ENCODE measurements at regions of chr3 and their contacts with region 1.

Region 1: DNA sequence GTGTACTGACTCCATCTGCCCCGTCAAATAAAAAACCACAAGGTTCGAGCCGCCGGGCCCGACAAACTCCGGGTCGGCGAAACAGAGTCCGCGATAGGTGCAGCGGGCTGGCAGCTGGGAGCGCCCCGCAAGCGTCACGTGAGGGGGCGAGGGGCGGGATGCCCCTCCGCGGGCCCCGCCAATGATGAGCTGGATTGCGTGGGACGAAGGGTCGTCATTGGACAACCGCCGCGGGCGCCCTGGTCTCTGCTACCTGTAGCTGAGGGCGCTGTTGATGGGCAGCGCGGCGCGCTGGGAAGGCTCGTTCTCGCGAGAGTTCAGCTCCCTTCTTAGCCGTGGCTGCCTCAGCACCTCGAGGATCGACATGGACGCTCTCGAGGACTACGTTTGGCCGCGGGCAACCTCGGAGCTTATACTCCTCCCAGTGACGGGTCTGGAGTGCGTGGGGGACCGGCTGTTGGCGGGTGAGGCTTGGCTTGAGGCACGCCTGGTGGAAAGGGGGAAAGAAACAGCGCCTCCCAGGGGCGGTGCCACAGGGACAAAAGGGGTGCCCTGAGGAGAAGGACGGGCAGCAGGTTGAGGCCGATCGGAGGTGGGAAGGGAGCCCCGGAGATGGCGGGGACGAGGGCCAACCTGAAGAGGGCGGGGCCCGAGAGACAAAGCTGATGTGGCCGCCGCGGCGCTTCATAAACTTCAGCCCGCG is at the start of gene WDR6:
- DNase-seq: peak; percentile 98
- H3K4me3 ChIP-seq: peak within 1 kb of the TSS; percentile 92
- H3K4me3 Mint-ChIP-seq: peak within 1 kb of the TSS; percentile 94
- H3K27ac Mint-ChIP-seq: peak within 1 kb of the TSS; percentile 98
- H3K4me1 ChIP-seq: peaks cover 26% of the 10 kb centered on the region
- H3K4me1 Mint-ChIP-seq: peaks cover 13% of the 10 kb centered on the region
- H3K27me3 ChIP-seq: no peaks in the 10 kb centered on the region
- H3K27me3 Mint-ChIP-seq: no peaks in the 10 kb centered on the region
- CTCF ChIP-seq: peak in 1 of 2 experiments; percentile 8
- total RNA-seq, gene WDR6: 184 and 185 TPM in 2 replicates

Region 2: GRCh38 chr3:48716982-48717746 is 290.1 kb before region 1 on chr3 and contains the start of gene IP6K2:
- CTCF ChIA-PET with region 1: no interaction called
- POLR2A ChIA-PET with region 1: interaction called, 12 read pairs
- intact Hi-C with region 1: no loop called
- DNase-seq: peak; percentile 99
- H3K4me3 ChIP-seq: peak within 1 kb of the TSS; percentile 55
- H3K4me3 Mint-ChIP-seq: peak within 1 kb of the TSS; percentile 66
- H3K27ac Mint-ChIP-seq: peak within 1 kb of the TSS; percentile 88
- H3K4me1 ChIP-seq: peaks cover 41% of the 10 kb centered on the region
- H3K4me1 Mint-ChIP-seq: peaks cover 42% of the 10 kb centered on the region
- H3K27me3 ChIP-seq: no peaks in the 10 kb centered on the region
- H3K27me3 Mint-ChIP-seq: no peaks in the 10 kb centered on the region
- CTCF ChIP-seq: no peak
- total RNA-seq, gene IP6K2: 91.7 and 100 TPM in 2 replicates

Region 3: DNA sequence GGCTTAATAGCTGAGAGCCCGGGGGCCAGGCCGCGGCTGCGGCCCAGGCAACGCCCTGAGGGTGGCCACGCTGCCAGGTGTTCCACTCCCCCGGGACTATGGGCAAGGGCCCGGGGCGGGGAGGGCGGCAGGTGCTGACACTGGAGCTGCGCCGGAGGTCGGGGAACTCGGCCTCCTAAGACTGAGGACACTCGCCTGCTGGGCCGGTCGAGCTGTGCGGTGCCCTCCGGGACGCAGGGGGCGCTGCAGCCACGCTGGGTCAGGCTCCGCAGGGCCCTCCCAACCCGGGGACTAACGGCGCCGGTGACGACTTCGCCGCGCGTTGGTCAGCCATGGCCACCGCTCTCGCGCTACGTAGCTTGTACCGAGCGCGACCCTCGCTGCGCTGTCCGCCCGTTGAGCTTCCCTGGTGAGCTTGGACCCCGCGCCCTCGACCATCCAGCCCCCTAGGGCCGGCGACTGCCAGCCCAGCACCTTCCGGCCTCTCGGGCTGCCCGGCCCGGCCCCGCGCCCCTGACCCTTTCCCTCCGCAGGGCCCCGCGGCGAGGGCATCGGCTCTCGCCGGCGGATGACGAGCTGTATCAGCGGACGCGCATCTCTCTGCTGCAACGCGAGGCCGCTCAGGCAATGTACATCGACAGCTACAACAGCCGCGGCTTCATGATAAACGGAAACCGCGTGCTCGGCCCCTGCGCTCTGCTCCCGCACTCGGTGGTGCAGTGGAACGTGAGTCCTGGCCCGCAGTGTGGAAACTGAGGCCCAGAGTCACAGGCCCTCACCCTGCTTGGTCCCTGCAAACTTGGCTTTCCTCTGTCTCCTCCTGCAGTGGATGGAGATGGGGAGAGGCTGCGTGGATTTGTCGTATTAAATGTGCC is 14.8 kb after region 1 on chr3 and contains the start of gene NDUFAF3:
- CTCF ChIA-PET with region 1: interaction called, 20 read pairs
- POLR2A ChIA-PET with region 1: interaction called, 92 read pairs
- intact Hi-C with region 1: no loop called
- DNase-seq: peak; percentile 95 to 98
- H3K4me3 ChIP-seq: peak within 1 kb of the TSS; percentile 85
- H3K4me3 Mint-ChIP-seq: peak within 1 kb of the TSS; percentile 88
- H3K27ac Mint-ChIP-seq: peak within 1 kb of the TSS; percentile 97
- H3K4me1 ChIP-seq: peaks cover 3% of the 10 kb centered on the region; the same call in 1 of the 2 replicates
- H3K4me1 Mint-ChIP-seq: peaks cover 6% of the 10 kb centered on the region
- H3K27me3 ChIP-seq: no peaks in the 10 kb centered on the region
- H3K27me3 Mint-ChIP-seq: no peaks in the 10 kb centered on the region
- CTCF ChIP-seq: peak; percentile 82 to 92
- total RNA-seq, gene NDUFAF3: 65.9 and 68.7 TPM in 2 replicates

Region 4: DNA sequence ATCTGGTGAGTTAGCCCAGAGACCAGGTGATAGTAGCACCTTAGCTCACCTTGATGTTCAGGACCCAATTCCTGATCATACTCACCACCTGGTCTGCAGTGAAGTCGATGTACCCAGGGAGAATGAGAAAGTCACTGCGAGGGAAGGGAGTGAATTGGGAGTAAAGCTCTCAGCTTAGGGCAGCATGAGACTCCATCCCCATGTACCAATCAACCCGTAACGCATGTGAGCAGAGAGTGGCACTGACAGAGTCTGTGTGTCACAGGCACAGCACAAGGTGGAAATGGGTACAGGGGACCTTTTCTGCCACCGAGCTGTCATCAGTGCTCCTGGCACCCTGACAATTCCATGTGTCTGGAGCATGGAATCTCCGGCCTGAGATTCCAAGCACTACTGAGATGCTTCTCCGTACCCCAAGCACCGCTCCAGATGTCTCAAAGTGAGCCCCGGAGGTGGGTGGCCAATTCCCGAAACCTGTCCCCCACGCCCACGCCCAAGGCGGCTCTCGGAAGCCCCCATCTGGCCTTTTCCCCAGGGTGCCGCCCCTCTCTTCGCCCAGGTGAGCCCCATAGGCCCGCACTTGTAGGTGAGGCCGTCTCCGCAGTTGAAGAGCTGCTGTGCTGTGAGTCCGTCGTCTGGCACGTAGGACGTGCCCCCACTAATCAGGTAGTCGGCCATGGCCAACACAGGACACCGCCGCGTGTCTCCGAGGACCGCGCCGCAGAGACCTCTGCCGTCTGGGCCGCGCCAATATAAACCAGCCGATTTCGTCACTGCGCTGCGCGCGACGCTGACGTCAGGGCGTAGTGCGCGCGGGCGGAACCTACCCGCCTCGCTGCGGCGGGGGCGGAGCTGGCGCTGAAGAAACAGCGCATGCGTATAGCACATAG is 21.7 kb after region 1 on chr3 and contains the start of gene IMPDH2:
- CTCF ChIA-PET with region 1: no interaction called
- POLR2A ChIA-PET with region 1: interaction called, 92 read pairs
- intact Hi-C with region 1: no loop called
- DNase-seq: peak; percentile 91 to 94
- H3K4me3 ChIP-seq: peak within 1 kb of the TSS; percentile 52
- H3K4me3 Mint-ChIP-seq: peak within 1 kb of the TSS; percentile 97
- H3K27ac Mint-ChIP-seq: peak within 1 kb of the TSS; percentile 100
- H3K4me1 ChIP-seq: peaks cover 12% of the 10 kb centered on the region
- H3K4me1 Mint-ChIP-seq: peaks cover 14% of the 10 kb centered on the region
- H3K27me3 ChIP-seq: no peaks in the 10 kb centered on the region
- H3K27me3 Mint-ChIP-seq: no peaks in the 10 kb centered on the region
- CTCF ChIP-seq: no peak
- total RNA-seq, gene IMPDH2: 233 and 240 TPM in 2 replicates

Region 5: DNA sequence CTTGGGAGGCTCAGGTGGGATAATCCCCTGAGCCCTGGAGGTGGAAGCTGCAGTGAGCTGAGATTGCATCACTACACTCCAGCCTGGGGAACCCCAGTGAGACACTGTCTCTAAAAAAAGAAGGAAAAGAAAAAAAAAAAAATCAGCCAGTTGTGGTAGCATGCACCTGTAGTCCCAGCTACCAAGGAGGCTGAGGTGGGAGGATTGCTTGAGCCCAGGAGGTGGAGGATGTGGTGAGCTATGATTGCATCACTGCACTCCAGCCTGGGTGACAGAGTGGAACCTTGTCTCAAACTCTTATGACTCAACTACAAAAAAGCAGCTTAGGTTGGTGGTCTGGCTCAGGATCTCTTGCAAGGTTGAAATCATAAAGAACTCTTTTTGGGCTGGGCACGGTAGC is 370.3 kb after region 1 on chr3:
- CTCF ChIA-PET with region 1: no interaction called
- POLR2A ChIA-PET with region 1: no interaction called
- intact Hi-C with region 1: no loop called
- DNase-seq: no peak
- H3K4me3 ChIP-seq: no peak overlapping the region
- H3K4me3 Mint-ChIP-seq: no peak overlapping the region
- H3K27ac Mint-ChIP-seq: peak overlapping the region; percentile 78
- H3K4me1 ChIP-seq: no peaks in the 10 kb centered on the region
- H3K4me1 Mint-ChIP-seq: peaks cover 7% of the 10 kb centered on the region
- H3K27me3 ChIP-seq: no peaks in the 10 kb centered on the region
- H3K27me3 Mint-ChIP-seq: no peaks in the 10 kb centered on the region
- CTCF ChIP-seq: no peak